ENCODE measurements at regions of chr2 and their contacts with region 1.

Region 1: DNA sequence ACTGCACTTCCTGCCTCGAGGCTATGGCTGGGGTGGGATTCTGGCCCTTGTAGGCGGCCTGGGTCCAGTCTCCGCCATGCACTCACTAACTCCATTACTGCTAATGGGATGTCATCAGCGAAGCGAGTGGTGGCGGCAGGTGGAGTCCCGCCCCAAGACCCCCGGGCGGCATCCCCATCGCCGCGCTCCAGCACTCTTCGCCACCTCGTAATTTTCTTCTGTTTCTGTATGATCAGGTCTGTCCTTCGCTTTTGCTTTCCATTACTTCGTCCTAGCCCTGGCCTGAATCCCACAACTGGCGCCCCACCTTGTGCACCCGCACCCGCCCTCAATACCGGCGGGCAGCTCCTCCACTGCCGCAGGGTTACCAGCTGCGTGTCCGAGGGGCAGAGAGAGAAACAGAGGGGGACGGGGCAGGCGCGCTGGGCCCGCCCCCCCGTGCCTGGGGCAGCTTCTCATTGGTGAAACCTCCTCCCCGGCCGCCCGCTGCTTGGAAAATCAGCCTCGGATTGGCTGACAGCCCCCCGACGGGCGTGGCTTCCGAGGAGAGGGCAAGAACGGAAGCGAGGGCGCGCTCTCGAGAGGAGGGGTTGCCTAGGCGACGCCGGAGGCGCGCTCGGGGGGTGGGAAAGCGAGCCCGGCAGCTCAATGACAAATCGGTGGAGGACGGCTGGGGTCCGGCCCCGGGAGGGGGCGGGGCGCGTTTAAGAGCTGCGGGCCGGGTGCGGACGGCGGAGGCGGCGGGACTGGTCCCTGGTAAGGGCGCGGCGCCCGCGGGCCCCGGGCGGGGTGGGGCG is at the start of gene RALB:
- DNase-seq: peak; percentile 95
- H3K4me3 ChIP-seq: peak within 1 kb of the TSS; percentile 90
- H3K27ac ChIP-seq: peak within 1 kb of the TSS; percentile 48
- H3K27me3 ChIP-seq: peaks cover 14% of the 10 kb centered on the region
- CTCF ChIP-seq: no peak
- polyA plus RNA-seq, gene RALB: 55.1 and 69.6 TPM in 2 replicates

Region 2: GRCh38 chr2:120223034-120223912 is 29.1 kb before region 1 on chr2 and contains the start of gene TMEM185B:
- CTCF ChIA-PET with region 1: no interaction called
- POLR2A ChIA-PET with region 1: interaction called, 11 read pairs
- DNase-seq: peak; percentile 36
- H3K4me3 ChIP-seq: peak within 1 kb of the TSS; percentile 66
- H3K27ac ChIP-seq: peak within 1 kb of the TSS; percentile 70
- H3K27me3 ChIP-seq: no peaks in the 10 kb centered on the region
- CTCF ChIP-seq: peak; percentile 38; the same call in 1 of the 2 replicates
- polyA plus RNA-seq, gene TMEM185B: 21.8 and 24.3 TPM in 2 replicates